ENCODE measurements at regions of chr16 and their contacts with region 1.

Region 1: GRCh38 chr16:3214904-3215600 is 19.9 kb downstream of the ZNF200 start:
- DNase-seq: peak in 8 of 9 experiments; percentile 3 to 86 (median 50)
- ATAC-seq: peak; percentile 86
- H3K4me3 ChIP-seq: peak overlapping the region in 1 of 2 experiments; percentile 40
- H3K4me3 Mint-ChIP-seq: peak overlapping the region; percentile 62
- H3K27ac ChIP-seq: peak overlapping the region; percentile 59 to 83
- H3K27ac Mint-ChIP-seq: peak overlapping the region; percentile 99
- H3K4me1 ChIP-seq: peaks cover 31% of the 10 kb centered on the region
- H3K4me1 Mint-ChIP-seq: peaks cover 39% of the 10 kb centered on the region
- H3K27me3 ChIP-seq: no peaks in the 10 kb centered on the region
- H3K27me3 Mint-ChIP-seq: no peaks in the 10 kb centered on the region
- CTCF ChIP-seq: no peak

Region 2: GRCh38 chr16:2513405-2514322 is 701.4 kb before region 1 on chr16 and contains the start of gene ATP6V0C:
- CTCF ChIA-PET with region 1: no interaction called
- POLR2A ChIA-PET with region 1: no interaction called
- intact Hi-C with region 1: no loop called
- DNase-seq: peak; percentile 84 to 97 (median 92)
- ATAC-seq: peak; percentile 89
- H3K4me3 ChIP-seq: peak within 1 kb of the TSS; percentile 67 to 69
- H3K4me3 Mint-ChIP-seq: peak within 1 kb of the TSS; percentile 94
- H3K27ac ChIP-seq: peak within 1 kb of the TSS; percentile 91 to 94
- H3K27ac Mint-ChIP-seq: peak within 1 kb of the TSS; percentile 97
- H3K4me1 ChIP-seq: peaks cover 47% of the 10 kb centered on the region
- H3K4me1 Mint-ChIP-seq: peaks cover 49% of the 10 kb centered on the region
- H3K27me3 ChIP-seq: no peaks in the 10 kb centered on the region
- H3K27me3 Mint-ChIP-seq: no peaks in the 10 kb centered on the region
- CTCF ChIP-seq: no peak
- total RNA-seq, gene ATP6V0C: 260 TPM

Region 3: GRCh38 chr16:3188925-3189825 is 25.9 kb before region 1 on chr16:
- CTCF ChIA-PET with region 1: no interaction called
- POLR2A ChIA-PET with region 1: interaction called, 4 read pairs
- intact Hi-C with region 1: loop called (anchors 1 to 2 kb)
- DNase-seq: peak in 4 of 9 experiments; percentile 46 to 59 (median 51)
- ATAC-seq: peak; percentile 41
- H3K4me3 ChIP-seq: peak overlapping the region; percentile 26 to 50
- H3K4me3 Mint-ChIP-seq: peak overlapping the region; percentile 70
- H3K27ac ChIP-seq: no peak overlapping the region
- H3K27ac Mint-ChIP-seq: no peak overlapping the region
- H3K4me1 ChIP-seq: peaks cover 38% of the 10 kb centered on the region
- H3K4me1 Mint-ChIP-seq: peaks cover 40% of the 10 kb centered on the region
- H3K27me3 ChIP-seq: peaks cover 50 to 55% of the 10 kb centered on the region in 2 experiments
- H3K27me3 Mint-ChIP-seq: peaks cover 66% of the 10 kb centered on the region
- CTCF ChIP-seq: no peak